SK-N-SH (cell line): ENCODE measurements at regions of chr22 and their contacts with region 1.

Region 1: GRCh38 chr22:21938071-21938822 is 14.4 kb downstream of the PPM1F start:
- DNase-seq: peak; percentile 96
- H3K4me3 ChIP-seq: peak overlapping the region; percentile 51 to 52
- H3K27ac ChIP-seq: peak overlapping the region; percentile 89 to 95
- H3K4me1 ChIP-seq: peaks cover 23 to 39% of the 10 kb centered on the region in 2 experiments; a peak in 3 of 4 replicates
- H3K27me3 ChIP-seq: no peaks in the 10 kb centered on the region
- CTCF ChIP-seq: peak; percentile 84
- EP300 ChIP-seq: no peak
- RAD21 ChIP-seq: peak; percentile 88

Region 2: DNA sequence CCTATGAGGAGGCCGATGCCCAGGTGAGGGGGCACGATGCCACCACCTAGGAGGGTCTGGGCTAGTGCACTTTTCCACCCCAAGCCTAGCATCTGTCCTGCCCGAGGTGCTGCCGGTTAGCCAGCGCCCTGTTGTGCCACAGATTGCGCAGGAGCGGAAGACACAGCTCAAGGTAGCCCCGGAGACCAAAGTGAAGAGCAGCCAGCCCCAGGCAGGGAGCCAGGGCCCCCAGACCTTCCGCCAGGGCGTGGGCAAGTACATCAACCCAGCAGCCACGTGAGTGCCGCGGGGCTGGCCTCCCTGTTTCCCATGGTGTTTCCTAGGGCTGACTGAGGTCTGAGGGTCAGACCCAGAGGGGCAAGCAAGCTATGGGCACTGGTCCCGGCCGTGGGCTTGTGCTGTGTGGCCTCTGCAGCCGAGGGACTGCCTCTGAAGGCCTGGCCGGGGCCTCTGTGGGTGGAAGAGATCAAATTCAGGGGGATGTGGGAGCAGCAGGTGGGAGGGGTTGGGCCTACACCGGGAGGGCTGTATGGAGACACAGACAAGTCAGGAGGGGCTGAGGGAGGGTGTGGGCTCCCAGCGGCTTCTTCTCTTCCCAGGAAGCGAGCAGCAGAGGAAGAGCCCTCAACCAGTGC is 243.3 kb before region 1 on chr22:
- CTCF ChIA-PET with region 1: interaction called, 11 read pairs
- POLR2A ChIA-PET with region 1: no interaction called
- DNase-seq: no peak
- H3K4me3 ChIP-seq: no peak overlapping the region
- H3K27ac ChIP-seq: no peak overlapping the region
- H3K4me1 ChIP-seq: peaks cover 0 to 8% of the 10 kb centered on the region in 2 experiments; a peak in 2 of 4 replicates
- H3K27me3 ChIP-seq: no peaks in the 10 kb centered on the region
- CTCF ChIP-seq: no peak
- EP300 ChIP-seq: no peak
- RAD21 ChIP-seq: no peak

Region 3: DNA sequence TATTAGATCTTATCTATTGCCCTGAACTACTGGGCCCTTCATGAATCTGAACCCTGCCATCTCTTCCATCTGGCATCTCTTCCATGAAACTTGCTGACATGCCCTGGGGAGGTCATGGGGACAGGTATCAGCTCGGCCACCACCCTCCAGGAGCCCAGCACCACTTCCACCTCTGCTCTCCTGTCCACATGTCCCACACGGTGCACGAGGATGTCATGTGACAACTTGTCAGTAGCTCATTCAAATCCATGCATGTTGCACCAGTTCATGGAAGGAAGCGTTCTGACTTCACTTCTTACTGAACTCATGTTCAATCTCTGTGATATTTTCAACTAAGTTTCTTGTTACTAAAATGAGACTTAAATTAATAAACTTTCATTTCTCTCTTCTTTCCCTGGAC is 219.2 kb before region 1 on chr22:
- CTCF ChIA-PET with region 1: interaction called, 90 read pairs
- POLR2A ChIA-PET with region 1: no interaction called
- DNase-seq: no peak
- H3K4me3 ChIP-seq: no peak overlapping the region
- H3K27ac ChIP-seq: no peak overlapping the region
- H3K4me1 ChIP-seq: peaks cover 0 to 2% of the 10 kb centered on the region in 2 experiments; a peak in 1 of 4 replicates
- H3K27me3 ChIP-seq: no peaks in the 10 kb centered on the region
- CTCF ChIP-seq: no peak
- EP300 ChIP-seq: no peak
- RAD21 ChIP-seq: no peak

Region 4: DNA sequence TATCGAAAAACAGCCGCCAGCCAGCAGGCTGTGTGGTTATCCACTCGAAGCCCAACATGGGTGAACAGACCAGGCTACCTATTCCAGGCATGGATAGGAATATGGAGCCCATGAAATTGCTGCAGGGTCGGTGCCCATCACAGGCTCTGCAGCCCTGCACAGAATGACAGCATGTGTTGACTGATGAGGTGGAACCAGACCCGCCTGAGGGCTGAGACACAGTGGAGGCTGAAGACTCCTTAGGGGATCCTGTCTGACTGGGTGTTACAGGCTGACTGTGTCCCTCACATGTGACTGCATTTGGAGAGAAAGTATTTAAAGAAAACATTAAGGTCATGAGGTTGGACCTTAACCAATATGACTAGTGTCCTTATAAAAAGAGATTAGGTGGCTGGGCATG is 196.4 kb before region 1 on chr22:
- CTCF ChIA-PET with region 1: interaction called, 11 read pairs
- POLR2A ChIA-PET with region 1: no interaction called
- DNase-seq: no peak
- H3K4me3 ChIP-seq: no peak overlapping the region
- H3K27ac ChIP-seq: no peak overlapping the region
- H3K4me1 ChIP-seq: no peaks in the 10 kb centered on the region
- H3K27me3 ChIP-seq: no peaks in the 10 kb centered on the region
- CTCF ChIP-seq: no peak
- EP300 ChIP-seq: no peak
- RAD21 ChIP-seq: no peak

Region 5: GRCh38 chr22:21907638-21908522 is 30.4 kb before region 1 on chr22:
- CTCF ChIA-PET with region 1: interaction called, 13 read pairs
- POLR2A ChIA-PET with region 1: interaction called, 5 read pairs
- DNase-seq: no peak
- H3K4me3 ChIP-seq: no peak overlapping the region
- H3K27ac ChIP-seq: no peak overlapping the region
- H3K4me1 ChIP-seq: no peaks in the 10 kb centered on the region
- H3K27me3 ChIP-seq: no peaks in the 10 kb centered on the region
- CTCF ChIP-seq: no peak
- EP300 ChIP-seq: no peak
- RAD21 ChIP-seq: no peak

Region 6: DNA sequence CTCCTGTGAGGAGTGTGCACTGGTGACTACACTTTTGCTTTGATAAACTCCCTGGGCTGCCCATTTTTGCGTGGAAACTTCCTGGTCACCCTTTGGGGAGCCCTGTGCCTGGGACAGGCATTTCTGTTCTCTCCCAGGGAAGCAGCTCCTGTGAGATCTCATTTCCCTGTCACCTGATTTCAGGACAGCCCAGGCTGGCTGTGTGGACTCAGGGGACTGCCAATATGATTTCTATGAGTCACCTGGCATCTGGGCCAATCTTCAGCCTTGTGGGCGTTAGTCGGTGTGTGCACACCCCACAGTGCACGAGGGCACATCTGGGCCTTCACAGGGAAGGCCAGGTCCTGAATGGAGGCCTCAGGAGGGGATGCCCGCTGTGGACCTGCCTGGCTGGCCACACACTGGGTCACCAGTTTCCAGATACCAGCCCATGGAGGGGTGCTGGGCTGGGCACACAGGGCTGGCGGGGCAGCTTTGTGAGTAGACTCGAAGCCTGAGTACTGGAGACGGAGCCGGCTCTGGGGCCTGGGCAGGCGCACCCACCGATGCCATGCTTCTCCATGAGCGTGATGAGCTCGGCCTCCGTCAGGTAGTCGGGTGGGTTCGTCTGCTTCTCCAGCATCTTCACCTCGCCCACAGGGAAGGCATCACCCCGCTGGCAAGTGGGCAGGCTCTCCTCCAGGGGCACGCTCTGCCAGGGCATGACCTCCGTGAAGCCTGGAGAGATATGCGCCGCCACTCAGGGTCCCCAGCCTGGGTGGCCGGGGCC is 23.8 kb after region 1 on chr22:
- CTCF ChIA-PET with region 1: interaction called, 11 read pairs
- POLR2A ChIA-PET with region 1: no interaction called
- DNase-seq: no peak
- H3K4me3 ChIP-seq: no peak overlapping the region
- H3K27ac ChIP-seq: no peak overlapping the region
- H3K4me1 ChIP-seq: no peaks in the 10 kb centered on the region
- H3K27me3 ChIP-seq: no peaks in the 10 kb centered on the region
- CTCF ChIP-seq: no peak
- EP300 ChIP-seq: no peak
- RAD21 ChIP-seq: no peak